ENCODE measurements at regions of chr10 and their contacts with region 1.

Region 1: DNA sequence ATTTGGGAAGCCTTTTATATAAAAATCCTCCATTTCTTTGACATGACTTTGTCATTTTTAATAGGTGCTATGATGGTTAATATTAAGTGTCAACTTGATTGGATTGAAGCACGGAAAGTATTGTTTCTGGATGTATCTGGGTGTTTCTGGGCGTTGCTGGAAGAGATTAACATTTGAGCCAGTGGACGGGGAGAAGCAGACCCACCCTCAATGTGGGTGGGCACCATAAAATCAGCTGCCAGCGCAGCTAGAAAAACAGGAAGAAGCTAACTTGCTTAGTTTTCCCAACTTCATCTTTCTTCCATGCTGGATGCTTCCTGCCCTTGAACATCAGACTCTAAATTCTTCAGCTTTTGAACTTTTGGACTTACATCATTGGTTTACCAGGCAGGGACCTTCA is 1003.0 kb downstream of the SORCS3 start:
- DNase-seq: no peak
- ATAC-seq: no peak
- H3K4me3 ChIP-seq: no peak overlapping the region
- H3K27ac ChIP-seq: no peak overlapping the region
- H3K4me1 ChIP-seq: no peaks in the 10 kb centered on the region
- H3K27me3 ChIP-seq: no peaks in the 10 kb centered on the region
- CTCF ChIP-seq: no peak
- POLR2A ChIP-seq: no peak
- RAD21 ChIP-seq: no peak

Region 2: DNA sequence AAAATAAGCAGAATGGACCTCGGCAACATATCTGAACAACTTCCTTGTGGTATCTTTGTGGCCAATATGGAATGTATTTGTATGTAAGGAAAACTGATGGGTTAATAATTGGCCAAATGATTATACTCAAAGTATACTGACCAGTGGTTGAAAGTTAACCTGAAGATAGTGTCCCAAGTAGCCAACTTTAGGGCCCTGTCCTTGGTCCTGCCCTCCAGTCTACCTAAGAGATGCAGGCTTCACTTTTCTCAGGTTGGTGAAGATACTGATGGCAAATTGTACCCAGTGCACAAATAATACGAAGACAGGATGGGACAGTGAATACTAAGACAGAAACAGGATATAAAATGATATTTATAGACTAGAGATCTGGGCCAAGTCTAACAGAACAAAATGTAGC is 893.8 kb before region 1 on chr10:
- CTCF ChIA-PET with region 1: no interaction called
- POLR2A ChIA-PET with region 1: no interaction called
- RAD21 ChIA-PET with region 1: no interaction called
- intact Hi-C with region 1: loop called (anchors 5 kb)
- DNase-seq: no peak
- ATAC-seq: no peak
- H3K4me3 ChIP-seq: no peak overlapping the region
- H3K27ac ChIP-seq: no peak overlapping the region
- H3K4me1 ChIP-seq: no peaks in the 10 kb centered on the region
- H3K27me3 ChIP-seq: peaks cover 37% of the 10 kb centered on the region
- CTCF ChIP-seq: no peak
- POLR2A ChIP-seq: no peak
- RAD21 ChIP-seq: no peak

Region 3: GRCh38 chr10:105387971-105388370 is 256.1 kb before region 1 on chr10:
- CTCF ChIA-PET with region 1: no interaction called
- POLR2A ChIA-PET with region 1: no interaction called
- RAD21 ChIA-PET with region 1: no interaction called
- intact Hi-C with region 1: no loop called
- DNase-seq: no peak
- ATAC-seq: no peak
- H3K4me3 ChIP-seq: no peak overlapping the region
- H3K27ac ChIP-seq: no peak overlapping the region
- H3K4me1 ChIP-seq: no peaks in the 10 kb centered on the region
- H3K27me3 ChIP-seq: no peaks in the 10 kb centered on the region
- CTCF ChIP-seq: no peak
- POLR2A ChIP-seq: no peak
- RAD21 ChIP-seq: no peak

Region 4: GRCh38 chr10:105674448-105674847 is 30.4 kb after region 1 on chr10:
- CTCF ChIA-PET with region 1: no interaction called
- POLR2A ChIA-PET with region 1: no interaction called
- RAD21 ChIA-PET with region 1: no interaction called
- intact Hi-C with region 1: no loop called
- DNase-seq: no peak
- ATAC-seq: no peak
- H3K4me3 ChIP-seq: no peak overlapping the region
- H3K27ac ChIP-seq: no peak overlapping the region
- H3K4me1 ChIP-seq: no peaks in the 10 kb centered on the region
- H3K27me3 ChIP-seq: no peaks in the 10 kb centered on the region
- CTCF ChIP-seq: no peak
- POLR2A ChIP-seq: no peak
- RAD21 ChIP-seq: no peak

Measured in HCT116 (cell line).